Activated B cell treated with CpG ODN at 0.5 μM for 24 hours (primary cell): ENCODE measurements at regions of chr6 and their contacts with region 1.

Region 1: DNA sequence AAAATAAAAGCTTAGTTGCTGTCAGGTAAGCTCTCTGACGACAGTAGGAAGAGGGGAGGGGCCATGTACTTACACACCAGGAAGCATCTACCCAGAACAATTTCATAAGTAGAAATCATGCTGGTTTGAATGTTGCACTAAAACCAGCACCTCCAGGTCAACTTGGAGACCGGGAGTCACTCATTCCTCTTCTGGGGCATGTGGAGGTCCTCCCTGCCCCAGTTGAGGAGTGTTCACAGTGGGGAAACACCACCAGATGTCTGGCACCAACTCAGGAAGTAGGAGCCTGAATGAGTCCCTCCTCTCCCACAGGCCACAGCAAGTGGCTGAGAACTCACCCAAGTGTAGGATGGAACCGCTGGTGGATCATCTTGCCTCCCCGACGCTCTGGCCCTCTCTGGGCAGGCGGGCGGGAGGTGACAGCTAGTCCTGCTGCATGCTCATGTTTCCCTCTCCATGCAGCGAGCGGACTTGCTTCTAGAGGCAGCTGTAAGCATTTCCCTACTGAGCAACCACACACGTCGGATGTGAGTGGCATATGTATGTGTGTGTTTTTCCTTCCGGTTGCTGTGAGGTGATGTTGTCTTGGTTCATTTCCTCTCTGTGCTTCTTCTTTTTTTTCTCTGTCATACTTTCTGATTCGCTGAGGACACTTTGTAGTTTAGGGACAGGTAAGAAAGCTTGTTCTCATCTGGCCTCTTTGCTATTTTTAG is 149.5 kb upstream of the NEDD9 start:
- DNase-seq: peak; percentile 58
- ATAC-seq: peak; percentile 89
- H3K4me3 Mint-ChIP-seq: peak overlapping the region; percentile 91
- H3K27ac Mint-ChIP-seq: peak overlapping the region; percentile 93
- H3K4me1 Mint-ChIP-seq: peaks cover 84% of the 10 kb centered on the region
- H3K27me3 Mint-ChIP-seq: no peaks in the 10 kb centered on the region
- CTCF ChIP-seq: no peak

Region 2: GRCh38 chr6:10534419-10534762 is 847.6 kb before region 1 on chr6:
- CTCF ChIA-PET with region 1: no interaction called
- POLR2A ChIA-PET with region 1: no interaction called
- intact Hi-C with region 1: loop called (anchors 10 kb)
- DNase-seq: peak; percentile 45
- ATAC-seq: peak; percentile 58
- H3K4me3 Mint-ChIP-seq: peak overlapping the region; percentile 88
- H3K27ac Mint-ChIP-seq: peak overlapping the region; percentile 99
- H3K4me1 Mint-ChIP-seq: peaks cover 92% of the 10 kb centered on the region
- H3K27me3 Mint-ChIP-seq: no peaks in the 10 kb centered on the region
- CTCF ChIP-seq: no peak

Region 3: DNA sequence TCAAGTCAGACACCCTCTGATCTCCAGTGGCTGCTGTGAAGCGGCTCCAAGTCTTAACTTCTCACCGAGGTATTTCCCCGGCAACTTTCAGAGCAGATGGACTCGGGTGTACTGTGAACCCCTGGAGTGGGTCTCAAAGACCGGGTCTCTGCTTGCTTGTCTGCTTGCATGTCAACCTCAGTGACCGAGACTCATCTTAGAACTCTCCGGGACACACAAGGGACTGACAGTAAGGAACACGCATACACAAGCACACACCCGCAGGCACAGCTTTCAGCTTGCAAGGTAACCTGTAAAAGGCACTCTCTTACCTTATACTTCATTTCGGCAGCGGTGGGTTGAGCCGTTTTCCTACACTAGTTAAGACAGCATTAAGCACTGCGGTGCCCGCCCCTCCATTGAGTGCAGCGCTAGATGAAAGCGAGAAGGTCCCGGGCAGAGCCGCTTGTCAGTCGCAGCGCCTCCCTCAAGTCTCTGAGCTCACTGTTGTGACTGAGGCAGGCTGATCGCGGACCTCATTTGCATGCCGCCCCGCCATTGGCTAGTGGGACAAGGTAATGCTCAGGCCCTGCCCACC is 149.7 kb before region 1 on chr6 and contains the start of gene NEDD9:
- CTCF ChIA-PET with region 1: no interaction called
- POLR2A ChIA-PET with region 1: no interaction called
- intact Hi-C with region 1: loop called (anchors 2 kb)
- DNase-seq: peak; percentile 79
- ATAC-seq: peak; percentile 99
- H3K4me3 Mint-ChIP-seq: peak within 1 kb of the TSS; percentile 95
- H3K27ac Mint-ChIP-seq: peak within 1 kb of the TSS; percentile 94
- H3K4me1 Mint-ChIP-seq: peaks cover 51% of the 10 kb centered on the region
- H3K27me3 Mint-ChIP-seq: no peaks in the 10 kb centered on the region
- CTCF ChIP-seq: no peak
- total RNA-seq, gene NEDD9: 57.4 and 61.9 TPM in 2 replicates

Region 4: GRCh38 chr6:11428895-11429294 is 46.9 kb after region 1 on chr6:
- CTCF ChIA-PET with region 1: no interaction called
- POLR2A ChIA-PET with region 1: interaction called, 9 read pairs
- intact Hi-C with region 1: loop called (anchors 5 kb)
- DNase-seq: no peak
- ATAC-seq: no peak
- H3K4me3 Mint-ChIP-seq: peak overlapping the region; percentile 33
- H3K27ac Mint-ChIP-seq: peak overlapping the region; percentile 47
- H3K4me1 Mint-ChIP-seq: peaks cover 43% of the 10 kb centered on the region
- H3K27me3 Mint-ChIP-seq: no peaks in the 10 kb centered on the region
- CTCF ChIP-seq: no peak

Region 5: GRCh38 chr6:11460001-11460668 is 78.2 kb after region 1 on chr6:
- CTCF ChIA-PET with region 1: interaction called, 4 read pairs
- POLR2A ChIA-PET with region 1: interaction called, 72 read pairs
- intact Hi-C with region 1: loop called (anchors 1 kb)
- DNase-seq: peak; percentile 22
- ATAC-seq: peak; percentile 18
- H3K4me3 Mint-ChIP-seq: peak overlapping the region; percentile 80
- H3K27ac Mint-ChIP-seq: peak overlapping the region; percentile 96
- H3K4me1 Mint-ChIP-seq: peaks cover 78% of the 10 kb centered on the region
- H3K27me3 Mint-ChIP-seq: no peaks in the 10 kb centered on the region
- CTCF ChIP-seq: no peak

Region 6: GRCh38 chr6:13355043-13355951 is 1973.3 kb after region 1 on chr6:
- CTCF ChIA-PET with region 1: no interaction called
- POLR2A ChIA-PET with region 1: no interaction called
- intact Hi-C with region 1: loop called (anchors 5 kb)
- DNase-seq: no peak
- ATAC-seq: peak; percentile 46
- H3K4me3 Mint-ChIP-seq: peak overlapping the region; percentile 70
- H3K27ac Mint-ChIP-seq: peak overlapping the region; percentile 92
- H3K4me1 Mint-ChIP-seq: peaks cover 70% of the 10 kb centered on the region
- H3K27me3 Mint-ChIP-seq: no peaks in the 10 kb centered on the region
- CTCF ChIP-seq: no peak